Activated T-helper 1 cell treated with anti-CD3 and anti-CD28 coated beads, Interleukin-12 subunit alpha, Interleukin-12 subunit beta, Interleukin-2, Interleukin-4 antibody, amounts not matched to agents 30 ng/mL and 10 ng/mL and 1 ng/mL, durations not matched to agents 14 hours and 24 hours and 36 hours (primary cell): ENCODE measurements at regions of chr10 and their contacts with region 1.

Region 1: DNA sequence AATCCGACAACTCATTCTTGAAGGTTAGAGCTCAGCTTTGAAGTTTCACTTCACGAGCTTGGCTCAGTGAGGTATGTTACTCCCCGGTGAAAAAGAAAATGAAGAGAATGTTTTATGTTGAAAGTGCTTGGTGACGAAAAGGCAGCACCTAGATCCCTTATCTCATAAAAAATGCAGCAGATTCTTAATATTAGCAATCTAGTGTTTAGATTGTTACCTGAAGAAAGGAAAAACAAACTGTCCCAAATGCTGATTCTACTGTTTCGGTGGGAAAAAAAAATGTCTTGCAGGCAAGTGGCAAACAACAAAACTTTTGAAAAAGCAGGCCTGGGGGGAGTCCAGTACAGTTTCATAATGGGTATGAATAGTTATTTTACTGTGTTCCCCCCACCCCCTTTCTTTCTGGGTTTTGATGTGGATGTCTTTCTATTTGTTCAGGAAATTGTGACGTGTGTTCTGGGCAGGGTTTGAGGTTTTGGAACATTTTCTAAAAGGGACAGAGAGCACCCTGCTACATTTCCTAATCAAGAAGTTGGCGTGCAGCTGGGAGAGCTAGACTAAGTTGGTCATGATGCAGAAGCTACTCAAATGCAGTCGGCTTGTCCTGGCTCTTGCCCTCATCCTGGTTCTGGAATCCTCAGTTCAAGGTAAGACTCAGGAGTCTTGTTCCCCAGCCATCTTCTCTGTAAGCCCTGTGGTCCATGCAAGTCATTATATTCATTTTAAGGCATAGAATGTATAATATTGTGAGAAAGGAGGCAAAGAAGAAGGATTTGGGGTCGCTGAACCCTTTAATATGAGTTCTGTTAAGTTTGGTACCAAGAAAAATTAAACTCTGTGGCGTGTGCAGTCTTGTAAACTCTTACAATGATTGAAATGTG is at the start of gene SRGN:
- DNase-seq: peak; percentile 81
- H3K4me3 Mint-ChIP-seq: peak within 1 kb of the TSS; percentile 92
- H3K27ac Mint-ChIP-seq: peak within 1 kb of the TSS; percentile 93
- H3K4me1 Mint-ChIP-seq: peaks cover 52% of the 10 kb centered on the region
- H3K27me3 Mint-ChIP-seq: no peaks in the 10 kb centered on the region
- total RNA-seq, gene SRGN: 1,217 and 1,242 TPM in 2 replicates

Region 2: GRCh38 chr10:68895041-68895440 is 192.8 kb before region 1 on chr10:
- intact Hi-C with region 1: no loop called
- DNase-seq: no peak
- H3K4me3 Mint-ChIP-seq: no peak overlapping the region
- H3K27ac Mint-ChIP-seq: no peak overlapping the region
- H3K4me1 Mint-ChIP-seq: peaks cover 18% of the 10 kb centered on the region
- H3K27me3 Mint-ChIP-seq: peaks cover 6% of the 10 kb centered on the region

Region 3: DNA sequence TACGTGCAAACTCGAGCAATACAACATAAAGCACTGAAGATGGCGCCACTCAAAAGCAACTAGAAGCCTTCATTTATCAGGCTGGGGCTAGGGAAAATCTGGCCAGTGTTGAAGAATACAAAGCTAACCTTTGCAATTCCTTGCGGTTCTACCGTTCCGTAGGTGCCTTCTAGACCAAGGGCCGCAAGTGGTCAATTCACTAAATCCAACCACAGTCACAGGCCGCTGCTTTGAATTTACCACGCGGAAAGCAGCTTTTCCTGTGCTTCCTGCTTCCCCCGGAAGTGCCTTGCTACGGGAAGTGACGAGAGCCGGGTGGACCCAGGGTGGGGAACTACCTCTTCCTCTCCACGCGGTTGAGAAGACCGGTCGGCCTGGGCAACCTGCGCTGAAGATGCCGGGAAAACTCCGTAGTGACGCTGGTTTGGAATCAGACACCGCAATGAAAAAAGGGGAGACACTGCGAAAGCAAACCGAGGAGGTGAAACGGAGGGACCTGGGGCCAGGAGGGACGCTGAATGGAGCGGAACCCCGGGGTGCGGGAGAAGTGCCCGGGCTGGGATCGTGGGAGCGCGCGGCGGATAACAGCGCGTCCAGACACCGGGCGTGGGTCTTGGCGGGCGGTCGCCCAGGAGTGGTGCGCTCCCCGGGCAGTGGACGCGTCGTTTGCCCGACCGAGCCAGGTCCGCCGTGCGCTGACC is 131.8 kb before region 1 on chr10 and contains the start of gene DDX21:
- intact Hi-C with region 1: loop called (anchors 1 kb)
- DNase-seq: peak; percentile 87
- H3K4me3 Mint-ChIP-seq: peak within 1 kb of the TSS; percentile 99
- H3K27ac Mint-ChIP-seq: peak within 1 kb of the TSS; percentile 99
- H3K4me1 Mint-ChIP-seq: peaks cover 25% of the 10 kb centered on the region
- H3K27me3 Mint-ChIP-seq: no peaks in the 10 kb centered on the region
- total RNA-seq, gene DDX21: 267 and 278 TPM in 2 replicates

Region 4: GRCh38 chr10:68997211-68997610 is 90.6 kb before region 1 on chr10:
- intact Hi-C with region 1: loop called (anchors 1 kb)
- DNase-seq: no peak
- H3K4me3 Mint-ChIP-seq: peak overlapping the region; percentile 16
- H3K27ac Mint-ChIP-seq: peak overlapping the region; percentile 86
- H3K4me1 Mint-ChIP-seq: peaks cover 35% of the 10 kb centered on the region
- H3K27me3 Mint-ChIP-seq: no peaks in the 10 kb centered on the region

Region 5: DNA sequence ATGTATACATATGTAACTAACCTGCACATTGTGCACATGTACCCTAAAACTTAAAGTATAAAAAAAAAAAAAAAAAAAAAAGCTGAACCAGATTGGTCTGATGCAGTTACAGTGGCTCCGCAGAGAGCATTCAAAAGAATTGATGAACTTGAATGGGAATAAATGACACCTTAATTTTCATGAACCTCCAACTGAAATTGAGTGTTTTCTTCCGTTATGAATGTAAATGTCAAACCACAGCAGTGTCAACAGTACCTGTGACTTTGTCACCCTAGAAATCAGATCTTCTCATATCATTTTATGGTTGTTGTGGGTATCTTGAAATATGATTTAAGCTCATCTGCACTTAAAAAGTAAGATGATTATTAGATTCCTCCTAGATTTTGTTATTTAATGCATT is 32.6 kb before region 1 on chr10:
- intact Hi-C with region 1: loop called (anchors 1 kb)
- DNase-seq: no peak
- H3K4me3 Mint-ChIP-seq: no peak overlapping the region
- H3K27ac Mint-ChIP-seq: peak overlapping the region; percentile 84
- H3K4me1 Mint-ChIP-seq: peaks cover 56% of the 10 kb centered on the region
- H3K27me3 Mint-ChIP-seq: no peaks in the 10 kb centered on the region

Region 6: GRCh38 chr10:69073026-69073425 is 14.8 kb before region 1 on chr10:
- intact Hi-C with region 1: no loop called
- DNase-seq: no peak
- H3K4me3 Mint-ChIP-seq: no peak overlapping the region
- H3K27ac Mint-ChIP-seq: no peak overlapping the region
- H3K4me1 Mint-ChIP-seq: peaks cover 17% of the 10 kb centered on the region
- H3K27me3 Mint-ChIP-seq: no peaks in the 10 kb centered on the region

Region 7: GRCh38 chr10:69248117-69248730 is 160.4 kb after region 1 on chr10:
- intact Hi-C with region 1: no loop called
- DNase-seq: no peak
- H3K4me3 Mint-ChIP-seq: no peak overlapping the region
- H3K27ac Mint-ChIP-seq: no peak overlapping the region
- H3K4me1 Mint-ChIP-seq: no peaks in the 10 kb centered on the region
- H3K27me3 Mint-ChIP-seq: peaks cover 1% of the 10 kb centered on the region

Region 8: GRCh38 chr10:70162892-70163201 is 1075.0 kb after region 1 on chr10:
- intact Hi-C with region 1: loop called (anchors 5 kb)
- DNase-seq: peak; percentile 58
- H3K4me3 Mint-ChIP-seq: peak overlapping the region; percentile 32
- H3K27ac Mint-ChIP-seq: peak overlapping the region; percentile 82
- H3K4me1 Mint-ChIP-seq: peaks cover 68% of the 10 kb centered on the region
- H3K27me3 Mint-ChIP-seq: no peaks in the 10 kb centered on the region